ENCODE measurements at regions of chrX and their contacts with region 1.

Region 1: DNA sequence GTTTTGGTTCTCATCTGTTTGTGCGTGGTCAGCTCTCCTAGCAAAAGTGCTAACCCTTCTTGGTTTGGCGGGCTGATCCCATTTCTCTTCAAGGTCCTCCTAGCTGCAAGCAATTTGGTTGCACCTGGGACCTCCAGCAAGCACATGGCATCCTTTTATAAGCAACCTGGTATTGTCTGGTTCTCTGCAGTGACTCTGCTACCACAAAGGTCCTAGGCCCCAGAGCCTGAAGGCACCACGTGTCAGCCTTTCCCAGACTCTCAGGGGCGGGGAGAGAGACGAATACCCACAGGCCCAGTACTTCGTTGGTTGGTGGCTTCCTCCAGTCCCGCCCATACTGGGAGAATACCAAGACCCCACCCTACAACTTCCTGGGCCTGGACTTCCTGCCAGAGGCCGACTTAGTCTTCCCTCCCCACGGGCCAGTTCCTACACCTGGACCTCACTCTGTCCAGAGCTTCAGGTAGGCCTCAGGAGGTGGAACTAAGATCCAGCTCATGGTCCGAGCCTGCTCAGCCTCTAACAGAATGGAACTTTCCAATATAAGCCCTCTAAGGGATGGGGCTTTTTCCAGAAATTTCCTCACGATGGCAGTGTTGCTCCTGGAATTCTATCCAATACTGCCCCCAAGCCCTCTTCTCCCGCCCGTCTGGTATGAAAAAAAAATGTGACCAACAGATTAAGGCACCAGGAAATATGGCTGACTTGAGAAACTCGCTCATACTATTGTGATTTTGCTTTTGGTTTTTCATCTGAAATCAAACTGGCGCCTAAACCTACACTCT is 192.5 kb upstream of the STK26 start:
- DNase-seq: peak; percentile 69
- ATAC-seq: peak; percentile 88
- H3K4me3 ChIP-seq: peak overlapping the region; percentile 62
- H3K27ac ChIP-seq: peak overlapping the region; percentile 48
- H3K4me1 ChIP-seq: peaks cover 4% of the 10 kb centered on the region; the same call in 1 of the 2 replicates
- H3K27me3 ChIP-seq: no peaks in the 10 kb centered on the region
- CTCF ChIP-seq: peak; percentile 28 to 57 (median 42); a peak in 4 of 6 replicates
- EP300 ChIP-seq: no peak
- POLR2A ChIP-seq: peak; percentile 67
- RAD21 ChIP-seq: peak; percentile 70

Region 2: GRCh38 chrX:131812836-131813825 is 17.5 kb before region 1 on chrX:
- CTCF ChIA-PET with region 1: interaction called, 26 read pairs
- POLR2A ChIA-PET with region 1: interaction called, 7 read pairs
- RAD21 ChIA-PET with region 1: interaction called, 13 read pairs
- SMC1A ChIA-PET with region 1: interaction called, 14 read pairs
- in situ Hi-C with region 1: no loop called
- intact Hi-C with region 1: no loop called
- DNase-seq: peak; percentile 92
- ATAC-seq: peak; percentile 95
- H3K4me3 ChIP-seq: peak overlapping the region; percentile 58
- H3K27ac ChIP-seq: peak overlapping the region; percentile 84
- H3K4me1 ChIP-seq: peaks cover 13% of the 10 kb centered on the region; the same call in 1 of the 2 replicates
- H3K27me3 ChIP-seq: no peaks in the 10 kb centered on the region
- CTCF ChIP-seq: peak; percentile 45 to 86 (median 64); a peak in 5 of 6 replicates
- EP300 ChIP-seq: peak in 1 of 2 experiments; percentile 53; a peak in 2 of 4 replicates
- POLR2A ChIP-seq: no peak
- RAD21 ChIP-seq: peak; percentile 89

Region 3: DNA sequence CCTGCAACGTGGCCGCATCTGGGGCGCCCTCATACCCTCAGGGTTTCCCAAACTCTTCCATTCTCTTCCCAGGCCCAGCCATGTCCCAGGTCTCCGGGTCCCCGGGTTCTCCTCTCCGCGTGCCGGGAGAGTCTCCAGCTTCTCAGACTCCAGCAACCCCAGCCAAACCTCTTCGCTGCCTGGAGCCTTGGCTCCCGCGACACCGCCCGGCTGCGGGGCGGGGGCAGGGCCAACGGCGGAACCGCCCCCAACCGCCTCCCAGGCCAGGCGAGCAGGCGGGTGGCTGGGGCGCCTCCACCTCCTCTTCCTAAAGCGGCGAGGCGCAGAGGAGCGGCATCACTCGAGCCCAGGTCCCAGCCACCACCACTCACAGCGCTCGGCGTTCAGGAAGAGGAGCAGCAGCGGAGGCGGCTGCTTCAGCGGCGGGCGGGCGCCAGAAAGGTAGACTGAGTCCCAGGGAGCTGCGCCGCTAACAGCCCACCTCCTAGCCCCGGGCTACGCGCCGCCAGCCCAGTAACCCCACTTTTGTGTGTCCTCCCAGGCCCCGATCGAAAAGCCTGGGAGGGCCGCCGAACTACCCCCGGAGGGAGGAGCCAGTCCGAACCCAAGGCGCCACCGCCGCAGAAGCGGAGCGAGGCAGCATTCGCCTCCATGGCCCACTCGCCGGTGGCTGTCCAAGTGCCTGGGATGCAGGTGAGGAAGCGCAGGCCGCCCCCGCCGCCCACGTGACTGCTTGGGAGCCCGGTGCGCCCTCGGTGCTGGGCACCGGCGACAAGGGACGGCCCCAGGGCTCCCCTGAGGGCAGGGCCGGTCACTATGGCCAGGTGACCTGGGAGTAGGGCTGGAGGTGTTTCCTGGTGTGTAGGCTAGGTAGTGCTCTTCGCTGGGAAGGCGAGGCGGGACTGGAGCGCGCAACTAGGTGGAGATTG is 192.6 kb after region 1 on chrX and contains the start of gene STK26:
- CTCF ChIA-PET with region 1: interaction called, 9 read pairs
- POLR2A ChIA-PET with region 1: interaction called, 4 read pairs
- RAD21 ChIA-PET with region 1: interaction called, 11 read pairs
- SMC1A ChIA-PET with region 1: interaction called, 9 read pairs
- in situ Hi-C with region 1: no loop called
- intact Hi-C with region 1: loop called (anchors 5 kb)
- DNase-seq: no peak
- ATAC-seq: peak; percentile 86
- H3K4me3 ChIP-seq: peak within 1 kb of the TSS; percentile 71
- H3K27ac ChIP-seq: peak within 1 kb of the TSS; percentile 87
- H3K4me1 ChIP-seq: no peaks in the 10 kb centered on the region
- H3K27me3 ChIP-seq: no peaks in the 10 kb centered on the region
- CTCF ChIP-seq: no peak
- EP300 ChIP-seq: no peak
- POLR2A ChIP-seq: peak; percentile 97
- RAD21 ChIP-seq: no peak
- polyA plus RNA-seq, gene STK26: 30.4 to 34.9 TPM

Region 4: DNA sequence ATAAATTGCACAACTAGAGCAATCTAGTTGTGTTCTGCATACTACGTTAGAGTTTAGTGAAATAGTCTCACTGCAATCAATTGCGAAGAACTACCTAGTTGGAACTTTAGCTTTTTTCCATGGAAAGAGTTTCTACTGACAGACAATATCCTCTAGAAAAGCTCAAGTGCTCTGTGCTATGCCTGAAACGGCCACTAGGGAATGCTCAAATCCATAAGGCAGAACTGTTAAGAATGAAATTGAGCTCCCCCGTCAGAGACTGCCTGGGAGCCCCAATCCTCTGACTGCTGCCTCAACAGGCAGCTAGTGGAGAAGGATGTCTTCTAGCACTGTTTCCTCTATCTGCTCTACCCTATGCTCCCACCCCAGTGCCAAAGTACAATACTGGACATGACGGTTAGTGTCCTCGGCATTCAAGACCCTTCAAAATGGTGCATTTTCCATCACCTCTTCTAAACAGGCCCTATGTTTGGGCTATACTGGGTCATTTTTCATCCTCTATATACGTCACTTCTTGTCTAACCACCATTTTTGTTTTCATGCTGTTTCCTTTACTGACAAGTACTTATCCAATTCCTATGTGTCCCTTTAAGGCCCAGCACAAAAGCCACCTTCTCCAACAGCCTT is 262.0 kb after region 1 on chrX:
- CTCF ChIA-PET with region 1: interaction called, 23 read pairs
- POLR2A ChIA-PET with region 1: no interaction called
- RAD21 ChIA-PET with region 1: interaction called, 10 read pairs
- SMC1A ChIA-PET with region 1: interaction called, 6 read pairs
- in situ Hi-C with region 1: no loop called
- intact Hi-C with region 1: no loop called
- DNase-seq: peak; percentile 25
- ATAC-seq: peak; percentile 93
- H3K4me3 ChIP-seq: no peak overlapping the region
- H3K27ac ChIP-seq: no peak overlapping the region
- H3K4me1 ChIP-seq: no peaks in the 10 kb centered on the region
- H3K27me3 ChIP-seq: no peaks in the 10 kb centered on the region
- CTCF ChIP-seq: peak; percentile 76 to 81 (median 81)
- EP300 ChIP-seq: no peak
- POLR2A ChIP-seq: no peak
- RAD21 ChIP-seq: peak; percentile 71

Region 5: GRCh38 chrX:132615391-132616131 is 785.0 kb after region 1 on chrX:
- CTCF ChIA-PET with region 1: interaction called, 40 read pairs
- POLR2A ChIA-PET with region 1: no interaction called
- RAD21 ChIA-PET with region 1: interaction called, 5 read pairs
- SMC1A ChIA-PET with region 1: interaction called, 3 read pairs
- in situ Hi-C with region 1: loop called (anchors 5 kb)
- intact Hi-C with region 1: loop called (anchors 5 kb)
- DNase-seq: no peak
- ATAC-seq: peak; percentile 93
- H3K4me3 ChIP-seq: no peak overlapping the region
- H3K27ac ChIP-seq: no peak overlapping the region
- H3K4me1 ChIP-seq: no peaks in the 10 kb centered on the region
- H3K27me3 ChIP-seq: no peaks in the 10 kb centered on the region
- CTCF ChIP-seq: peak; percentile 53 to 59 (median 54)
- EP300 ChIP-seq: no peak
- POLR2A ChIP-seq: no peak
- RAD21 ChIP-seq: peak; percentile 51

Measured in GM12878 (cell line).